Panc1 (cell line): ENCODE measurements at regions of chr7 and their contacts with region 1.

Region 1: DNA sequence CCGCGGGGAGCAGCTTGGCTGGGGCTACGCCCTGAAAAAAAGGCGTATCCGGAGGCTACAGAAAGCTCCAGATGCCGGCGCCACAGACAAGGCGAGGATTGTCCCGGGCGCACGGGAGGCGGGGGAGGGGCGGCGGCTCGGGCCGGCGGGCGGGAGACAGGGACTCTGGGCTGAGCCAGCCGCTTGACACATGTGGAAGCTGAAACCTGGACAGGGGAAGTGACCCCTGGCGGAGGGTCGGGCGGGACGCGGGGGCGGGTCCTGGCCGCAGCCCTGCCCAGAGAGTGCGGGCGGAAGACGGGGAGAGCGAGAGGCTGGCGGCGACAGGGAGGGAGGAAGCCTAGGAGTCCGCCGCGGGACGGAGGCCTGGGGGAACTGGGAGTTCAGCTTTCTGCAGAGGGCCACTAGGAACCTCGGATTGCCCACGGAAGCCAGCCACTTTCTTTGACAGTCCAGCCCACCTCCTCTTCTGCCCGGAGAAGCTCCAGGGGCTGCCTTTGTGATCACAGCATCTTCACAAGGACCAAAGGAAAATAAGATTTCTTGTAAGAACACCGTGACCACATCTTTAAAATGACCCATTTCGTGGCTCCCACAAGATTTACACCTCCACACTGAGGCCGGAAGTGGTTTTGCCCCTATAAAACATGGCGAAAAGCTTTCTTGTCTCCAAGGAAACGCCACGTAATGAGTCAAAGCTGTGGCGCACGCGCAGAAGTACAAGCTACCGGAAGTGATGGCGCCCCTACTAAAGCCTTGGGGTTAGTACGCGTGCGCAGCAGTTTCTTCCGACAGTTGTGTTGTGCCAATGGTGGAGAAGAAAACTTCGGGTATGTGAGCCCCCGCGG is at the starts of genes PLOD3 and ZNHIT1:
- DNase-seq: peak; percentile 96
- ATAC-seq: peak; percentile 94
- H3K4me3 ChIP-seq: peak within 1 kb of the TSS; percentile 85 to 97
- H3K27ac ChIP-seq: peak within 1 kb of the TSS; percentile 95
- H3K4me1 ChIP-seq: peaks cover 13% of the 10 kb centered on the region
- H3K27me3 ChIP-seq: no peaks in the 10 kb centered on the region
- CTCF ChIP-seq: no peak; the same call in 1 of the 2 replicates
- total RNA-seq, gene PLOD3: 93.0 TPM
- total RNA-seq, gene ZNHIT1: 69.7 TPM

Region 2: GRCh38 chr7:100623951-100624824 is 593.4 kb before region 1 on chr7:
- CTCF ChIA-PET with region 1: no interaction called
- POLR2A ChIA-PET with region 1: interaction called, 10 read pairs
- in situ Hi-C with region 1: no loop called
- intact Hi-C with region 1: no loop called
- DNase-seq: no peak
- ATAC-seq: no peak
- H3K4me3 ChIP-seq: no peak overlapping the region
- H3K27ac ChIP-seq: no peak overlapping the region
- H3K4me1 ChIP-seq: no peaks in the 10 kb centered on the region
- H3K27me3 ChIP-seq: no peaks in the 10 kb centered on the region
- CTCF ChIP-seq: no peak

Region 3: DNA sequence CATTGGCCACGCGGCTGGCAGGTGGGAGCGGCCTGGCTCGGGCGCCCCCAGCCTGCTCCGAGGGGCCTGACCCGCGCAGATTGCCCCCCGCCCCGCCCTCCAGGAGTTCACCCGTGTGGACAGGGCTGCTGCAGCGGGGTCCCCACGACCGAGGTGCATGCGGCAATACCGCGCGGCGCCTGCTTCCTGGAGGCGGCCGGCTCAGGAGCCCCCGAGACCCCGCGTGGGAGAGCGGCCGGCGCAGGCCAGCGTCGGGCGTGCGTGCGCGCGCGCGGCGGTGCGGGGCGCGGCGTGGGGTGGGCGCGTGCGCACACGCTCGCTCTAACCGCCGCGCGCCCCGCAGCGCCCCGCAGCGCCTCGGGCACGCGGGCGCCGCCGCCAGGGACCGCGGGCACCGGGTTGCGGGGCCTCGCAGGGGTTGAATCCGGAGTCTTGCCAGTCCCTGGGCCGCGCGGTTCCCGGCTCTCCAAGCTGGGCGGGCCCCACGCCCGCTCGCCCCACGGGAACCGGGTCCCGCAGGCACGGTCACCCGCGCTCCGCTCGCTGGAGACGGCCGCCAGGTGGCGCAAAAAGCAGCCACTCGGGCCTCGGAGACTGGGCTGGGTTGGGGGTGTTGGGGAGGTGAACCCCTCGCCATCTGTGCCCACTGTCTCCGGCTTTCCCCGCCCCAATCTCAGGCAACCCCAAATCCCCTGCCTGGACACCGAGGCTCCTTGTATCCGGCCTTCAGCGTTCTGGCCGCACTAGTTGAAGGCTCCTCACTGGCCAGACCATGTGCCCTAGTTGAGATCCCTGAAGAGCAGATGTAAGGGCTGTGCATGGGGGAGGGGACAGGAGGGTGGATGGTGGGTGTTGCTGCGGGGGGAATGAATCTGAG is 320.6 kb before region 1 on chr7:
- CTCF ChIA-PET with region 1: no interaction called
- POLR2A ChIA-PET with region 1: no interaction called
- in situ Hi-C with region 1: no loop called
- intact Hi-C with region 1: no loop called
- DNase-seq: no peak
- ATAC-seq: peak; percentile 56
- H3K4me3 ChIP-seq: peak overlapping the region; percentile 50 to 57
- H3K27ac ChIP-seq: no peak overlapping the region; the same call in 1 of the 2 replicates
- H3K4me1 ChIP-seq: peaks cover 16% of the 10 kb centered on the region
- H3K27me3 ChIP-seq: no peaks in the 10 kb centered on the region; the same call in 1 of the 2 replicates
- CTCF ChIP-seq: peak; percentile 94

Region 4: DNA sequence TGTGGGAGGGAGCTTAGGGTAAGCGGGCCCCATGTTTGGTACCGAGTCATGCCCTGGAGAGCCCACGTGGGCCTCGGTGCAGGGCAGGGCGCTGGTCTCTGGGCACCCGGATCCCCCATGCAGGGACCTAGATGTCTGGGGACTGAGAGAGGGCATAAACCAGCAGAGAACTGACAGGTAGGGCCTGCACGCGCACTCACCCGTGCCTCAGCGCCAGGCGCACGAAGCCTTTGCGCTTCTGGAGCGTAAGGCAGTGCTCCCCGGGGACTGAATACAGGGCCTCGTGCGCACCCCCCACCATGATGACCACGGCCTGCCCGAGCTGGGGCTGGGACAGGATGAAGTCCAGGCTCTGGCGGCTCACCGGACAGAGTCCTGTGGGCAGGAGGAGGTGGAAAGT is 19.6 kb before region 1 on chr7:
- CTCF ChIA-PET with region 1: no interaction called
- POLR2A ChIA-PET with region 1: interaction called, 10 read pairs
- in situ Hi-C with region 1: no loop called
- intact Hi-C with region 1: no loop called
- DNase-seq: no peak
- ATAC-seq: no peak
- H3K4me3 ChIP-seq: no peak overlapping the region
- H3K27ac ChIP-seq: no peak overlapping the region
- H3K4me1 ChIP-seq: peaks cover 5% of the 10 kb centered on the region; the same call in 1 of the 2 replicates
- H3K27me3 ChIP-seq: no peaks in the 10 kb centered on the region
- CTCF ChIP-seq: no peak

Region 5: DNA sequence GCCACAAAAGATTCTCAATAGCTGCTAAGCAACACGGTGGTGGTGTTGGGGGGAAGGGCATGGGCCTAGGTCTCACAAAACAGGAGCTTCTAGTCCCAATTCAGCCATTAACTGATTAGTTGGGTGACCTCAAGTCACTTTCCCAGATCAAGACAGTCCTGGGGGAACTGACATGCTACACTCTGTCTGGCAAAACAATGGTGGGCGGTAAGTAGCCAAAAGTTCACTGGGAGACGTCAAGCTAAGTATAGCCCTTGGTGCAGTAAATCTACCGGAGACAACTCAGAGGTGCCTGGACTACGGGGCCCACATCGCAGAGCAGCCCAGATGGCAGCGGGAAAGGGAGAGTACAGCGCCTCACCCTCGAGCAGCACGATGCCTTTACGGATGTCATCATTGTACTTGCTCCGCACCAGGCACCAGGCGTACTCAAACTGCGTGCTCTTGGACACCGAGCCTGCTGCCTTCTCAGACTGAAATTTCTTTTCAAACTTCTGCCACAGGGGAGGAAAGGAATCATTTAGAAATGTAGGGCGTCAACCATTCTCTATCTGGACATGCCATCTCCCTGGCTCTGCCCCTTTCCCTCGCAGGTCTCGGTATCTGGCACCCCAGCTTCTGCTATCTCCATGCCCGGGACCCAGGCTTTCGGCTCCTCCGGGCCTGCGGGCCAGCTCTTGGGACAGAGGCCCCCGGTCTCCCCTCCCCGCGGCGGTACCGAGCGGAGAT is 26.2 kb after region 1 on chr7:
- CTCF ChIA-PET with region 1: interaction called, 8 read pairs
- POLR2A ChIA-PET with region 1: interaction called, 11 read pairs
- in situ Hi-C with region 1: no loop called
- intact Hi-C with region 1: no loop called
- DNase-seq: no peak
- ATAC-seq: no peak
- H3K4me3 ChIP-seq: peak overlapping the region; percentile 92 to 100
- H3K27ac ChIP-seq: peak overlapping the region; percentile 97
- H3K4me1 ChIP-seq: peaks cover 12% of the 10 kb centered on the region; the same call in 1 of the 2 replicates
- H3K27me3 ChIP-seq: no peaks in the 10 kb centered on the region
- CTCF ChIP-seq: no peak